Sciatic nerve (tissue), 2 donors: ENCODE measurements at regions of chr15 and their contacts with region 1.

Region 1: DNA sequence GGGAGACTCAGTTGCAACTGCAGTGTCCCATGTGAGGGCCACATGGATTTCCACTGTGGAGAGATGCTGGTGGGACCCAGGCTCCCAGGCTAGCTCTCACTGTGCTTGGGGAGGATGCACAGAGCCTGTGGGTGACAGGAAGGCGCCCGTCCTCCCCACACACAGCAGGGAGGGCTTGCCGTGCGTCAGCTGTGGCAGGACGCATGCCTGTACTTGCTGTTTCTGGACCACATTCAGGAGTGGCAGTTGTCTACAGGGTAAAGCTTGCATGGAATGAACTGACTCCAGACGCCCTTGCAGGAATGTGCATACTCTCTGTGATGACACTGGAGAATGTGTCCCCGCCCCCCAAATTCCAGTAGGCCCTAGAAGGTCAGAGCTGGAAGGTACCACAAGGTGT is 63.8 kb upstream of the SNRPA1 start:
- DNase-seq: no peak
- ATAC-seq: peak; percentile 29

Region 2: GRCh38 chr15:100484443-100484842 is 874.5 kb before region 1 on chr15:
- intact Hi-C with region 1: no loop called
- DNase-seq: no peak
- ATAC-seq: no peak

Region 3: GRCh38 chr15:101342056-101342455 is 16.8 kb before region 1 on chr15:
- intact Hi-C with region 1: no loop called
- DNase-seq: no peak
- ATAC-seq: no peak

Region 4: GRCh38 chr15:101562428-101563059 is 203.6 kb after region 1 on chr15:
- intact Hi-C with region 1: loop called (anchors 1 kb)
- DNase-seq: no peak
- ATAC-seq: no peak